Activated CD8-positive, alpha-beta T cell treated with anti-CD3 and anti-CD28 coated beads for 36 hours (primary cell): ENCODE measurements at regions of chr17 and their contacts with region 1.

Region 1: GRCh38 chr17:58317421-58318064 is 11.1 kb downstream of the TSPOAP1 start:
- DNase-seq: peak; percentile 89
- ATAC-seq: peak; percentile 98
- H3K4me3 Mint-ChIP-seq: peak overlapping the region; percentile 20
- H3K27ac Mint-ChIP-seq: peak overlapping the region; percentile 90
- H3K4me1 Mint-ChIP-seq: peaks cover 15% of the 10 kb centered on the region
- H3K27me3 Mint-ChIP-seq: no peaks in the 10 kb centered on the region
- CTCF ChIP-seq: peak; percentile 78

Region 2: DNA sequence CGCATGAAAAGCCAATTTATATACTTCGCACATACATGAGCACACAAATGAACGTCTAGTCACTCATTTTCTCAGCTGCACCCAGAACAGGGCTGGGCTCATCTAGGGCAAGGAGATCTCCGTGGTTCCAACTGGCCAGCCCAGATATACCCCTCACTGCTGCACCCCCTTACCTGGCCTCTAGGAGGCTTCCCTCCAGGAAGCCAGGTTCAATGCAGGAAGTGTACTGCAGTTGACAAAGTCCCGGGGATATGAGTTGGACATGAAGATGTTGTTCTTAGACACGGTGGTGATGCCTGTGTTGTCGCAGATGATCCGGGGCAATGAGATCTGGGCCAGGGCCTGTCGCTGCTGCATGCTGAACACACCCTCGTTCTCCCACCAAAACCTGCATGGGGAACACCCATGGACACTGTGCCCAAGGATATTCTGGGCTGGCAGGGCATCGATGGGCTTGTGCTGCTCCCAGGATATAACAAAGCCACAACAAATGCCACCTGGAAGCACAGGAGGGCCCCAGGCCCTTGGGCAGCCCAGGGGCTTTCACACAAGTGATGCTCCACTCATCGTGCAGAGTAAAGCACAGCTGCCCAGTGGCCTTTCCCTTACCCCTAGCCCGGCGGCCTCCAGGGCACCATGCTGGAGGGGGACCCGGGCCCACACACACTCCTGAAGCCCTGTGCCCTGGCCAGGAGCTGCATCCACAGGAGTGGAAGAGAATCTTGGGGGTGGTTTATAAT is 46.9 kb before region 1 on chr17:
- CTCF ChIA-PET with region 1: no interaction called
- POLR2A ChIA-PET with region 1: no interaction called
- intact Hi-C with region 1: no loop called
- DNase-seq: no peak
- ATAC-seq: peak; percentile 34
- H3K4me3 Mint-ChIP-seq: no peak overlapping the region
- H3K27ac Mint-ChIP-seq: no peak overlapping the region
- H3K4me1 Mint-ChIP-seq: no peaks in the 10 kb centered on the region
- H3K27me3 Mint-ChIP-seq: peaks cover 7% of the 10 kb centered on the region
- CTCF ChIP-seq: peak; percentile 36

Region 3: DNA sequence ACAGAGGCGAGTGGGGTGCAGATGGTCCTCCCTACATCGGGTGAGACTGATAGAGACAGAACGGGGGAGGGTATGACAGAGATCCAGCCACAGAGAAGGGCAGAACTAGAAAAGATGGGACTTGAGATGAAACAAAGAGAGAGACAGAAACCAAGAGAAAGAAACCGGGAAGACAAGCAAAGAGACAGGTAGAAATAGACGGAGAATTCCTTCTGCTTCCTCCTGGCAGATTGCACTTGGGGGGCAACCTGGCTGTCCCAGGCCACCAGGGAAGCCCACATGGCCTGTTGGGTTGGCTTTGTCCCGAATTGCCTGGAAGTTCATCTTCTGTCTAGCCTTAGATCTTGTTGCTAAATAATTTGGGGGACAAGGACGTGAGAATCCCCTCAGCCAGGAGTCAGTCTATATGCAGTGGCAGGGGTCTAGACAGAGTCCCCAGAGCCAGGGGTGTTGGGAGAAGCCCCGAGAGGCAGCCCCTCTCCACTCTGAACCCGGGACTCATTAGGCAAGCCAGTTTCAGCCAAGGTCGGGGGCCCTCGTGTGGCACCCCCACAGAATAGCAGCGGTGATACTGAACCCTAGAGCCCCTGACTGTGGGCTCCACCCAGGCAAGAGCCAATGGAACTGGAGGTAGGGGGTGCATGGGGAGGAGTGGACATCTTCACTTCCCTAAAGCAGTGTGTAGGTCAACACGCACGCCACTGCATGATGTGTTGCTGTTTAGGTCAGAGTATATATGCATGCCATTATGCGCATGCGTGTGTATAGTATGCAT is 11.7 kb after region 1 on chr17:
- CTCF ChIA-PET with region 1: interaction called, 56 read pairs
- POLR2A ChIA-PET with region 1: interaction called, 1,558 read pairs
- intact Hi-C with region 1: no loop called
- DNase-seq: peak; percentile 95
- ATAC-seq: peak; percentile 48
- H3K4me3 Mint-ChIP-seq: peak overlapping the region; percentile 81
- H3K27ac Mint-ChIP-seq: peak overlapping the region; percentile 96
- H3K4me1 Mint-ChIP-seq: peaks cover 40% of the 10 kb centered on the region
- H3K27me3 Mint-ChIP-seq: peaks cover 7% of the 10 kb centered on the region
- CTCF ChIP-seq: peak; percentile 57

Region 4: GRCh38 chr17:58352014-58352842 is 34.7 kb after region 1 on chr17 and contains the start of gene SUPT4H1:
- CTCF ChIA-PET with region 1: interaction called, 161 read pairs
- POLR2A ChIA-PET with region 1: interaction called, 1,558 read pairs
- intact Hi-C with region 1: loop called (anchors 5 kb)
- DNase-seq: peak; percentile 93
- ATAC-seq: peak; percentile 92
- H3K4me3 Mint-ChIP-seq: peak within 1 kb of the TSS; percentile 97
- H3K27ac Mint-ChIP-seq: peak within 1 kb of the TSS; percentile 97
- H3K4me1 Mint-ChIP-seq: peaks cover 43% of the 10 kb centered on the region
- H3K27me3 Mint-ChIP-seq: no peaks in the 10 kb centered on the region
- CTCF ChIP-seq: no peak
- total RNA-seq, gene SUPT4H1: 104 to 110 TPM

Region 5: DNA sequence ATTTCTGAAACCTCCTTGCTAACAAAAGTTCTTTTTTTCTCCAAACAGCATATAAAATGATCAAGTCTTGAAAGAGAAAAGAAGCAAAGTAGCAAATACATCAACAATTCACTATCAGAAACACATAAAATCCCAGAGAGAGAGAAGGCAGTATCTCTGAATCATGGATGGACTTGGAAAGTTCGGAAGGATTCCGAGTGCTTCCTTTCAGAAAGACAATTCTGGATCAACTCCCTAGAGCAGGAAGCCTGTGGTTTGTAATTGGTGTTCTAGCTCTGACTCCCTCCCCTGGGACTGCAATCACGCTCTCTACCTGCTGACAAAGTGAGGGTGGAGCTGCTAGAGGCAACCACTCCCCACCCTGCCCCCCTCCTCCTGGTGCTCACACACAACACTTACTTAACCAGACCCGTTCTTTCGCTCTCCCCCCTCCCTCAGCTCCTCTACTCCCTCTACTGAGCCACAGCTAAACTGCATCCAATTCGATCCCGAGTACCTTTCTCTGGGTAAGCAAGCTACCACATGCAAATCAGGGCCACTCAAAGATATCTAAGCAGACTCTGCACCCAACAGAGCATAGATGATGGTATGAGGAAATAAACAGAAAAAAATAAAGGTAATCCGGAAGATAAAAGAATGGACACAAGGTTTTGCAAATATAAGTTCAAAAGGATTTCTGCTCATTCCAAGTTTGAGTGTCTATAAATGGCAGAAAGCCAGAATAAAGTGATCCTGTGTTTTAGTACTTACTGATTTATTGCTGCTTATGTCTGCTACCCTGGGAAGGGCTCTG is 100.0 kb after region 1 on chr17 and contains the start of gene RNF43:
- CTCF ChIA-PET with region 1: interaction called, 130 read pairs
- POLR2A ChIA-PET with region 1: interaction called, 3 read pairs
- intact Hi-C with region 1: loop called (anchors 5 kb)
- DNase-seq: peak; percentile 96
- ATAC-seq: peak; percentile 100
- H3K4me3 Mint-ChIP-seq: peak within 1 kb of the TSS; percentile 23
- H3K27ac Mint-ChIP-seq: peak within 1 kb of the TSS; percentile 66
- H3K4me1 Mint-ChIP-seq: peaks cover 21% of the 10 kb centered on the region
- H3K27me3 Mint-ChIP-seq: no peaks in the 10 kb centered on the region
- CTCF ChIP-seq: peak; percentile 78
- total RNA-seq, gene RNF43: 0.34 to 1.1 TPM

Region 6: DNA sequence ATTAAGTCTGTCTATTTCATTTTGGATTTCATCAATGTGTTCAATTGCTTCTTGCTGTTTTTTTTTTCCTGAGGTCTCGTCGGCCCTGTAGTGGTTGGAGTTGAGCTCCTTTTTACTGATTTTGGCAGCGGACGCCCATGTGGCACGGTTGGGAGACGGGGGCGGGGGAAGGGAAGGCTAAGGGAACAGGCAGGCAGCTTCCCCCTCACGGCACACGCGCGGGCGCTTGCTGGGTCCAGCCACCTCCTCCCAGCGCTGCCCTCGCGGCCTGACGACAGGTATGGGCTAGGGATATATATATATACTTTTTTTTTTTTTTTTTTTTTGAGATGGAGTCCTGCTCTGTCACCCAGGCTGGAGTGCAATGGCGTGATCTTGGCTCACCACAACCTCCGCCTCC is 159.3 kb after region 1 on chr17:
- CTCF ChIA-PET with region 1: interaction called, 11 read pairs
- POLR2A ChIA-PET with region 1: no interaction called
- intact Hi-C with region 1: no loop called
- DNase-seq: no peak
- ATAC-seq: no peak
- H3K4me3 Mint-ChIP-seq: no peak overlapping the region
- H3K27ac Mint-ChIP-seq: no peak overlapping the region
- H3K4me1 Mint-ChIP-seq: peaks cover 7% of the 10 kb centered on the region
- H3K27me3 Mint-ChIP-seq: no peaks in the 10 kb centered on the region
- CTCF ChIP-seq: no peak